ENCODE measurements at regions of chr2 and their contacts with region 1.

Region 1: GRCh38 chr2:54074606-54075341 is 40.6 kb upstream of the ACYP2 start:
- DNase-seq: no peak

Region 2: GRCh38 chr2:54402350-54402749 is 327.6 kb after region 1 on chr2:
- intact Hi-C with region 1: loop called in 1 of 2 experiments (anchors 5 kb)
- DNase-seq: no peak

Measured in posterior vena cava (tissue), 2 donors.